BJ (cell line): ENCODE measurements at regions of chr16 and their contacts with region 1.

Region 1: DNA sequence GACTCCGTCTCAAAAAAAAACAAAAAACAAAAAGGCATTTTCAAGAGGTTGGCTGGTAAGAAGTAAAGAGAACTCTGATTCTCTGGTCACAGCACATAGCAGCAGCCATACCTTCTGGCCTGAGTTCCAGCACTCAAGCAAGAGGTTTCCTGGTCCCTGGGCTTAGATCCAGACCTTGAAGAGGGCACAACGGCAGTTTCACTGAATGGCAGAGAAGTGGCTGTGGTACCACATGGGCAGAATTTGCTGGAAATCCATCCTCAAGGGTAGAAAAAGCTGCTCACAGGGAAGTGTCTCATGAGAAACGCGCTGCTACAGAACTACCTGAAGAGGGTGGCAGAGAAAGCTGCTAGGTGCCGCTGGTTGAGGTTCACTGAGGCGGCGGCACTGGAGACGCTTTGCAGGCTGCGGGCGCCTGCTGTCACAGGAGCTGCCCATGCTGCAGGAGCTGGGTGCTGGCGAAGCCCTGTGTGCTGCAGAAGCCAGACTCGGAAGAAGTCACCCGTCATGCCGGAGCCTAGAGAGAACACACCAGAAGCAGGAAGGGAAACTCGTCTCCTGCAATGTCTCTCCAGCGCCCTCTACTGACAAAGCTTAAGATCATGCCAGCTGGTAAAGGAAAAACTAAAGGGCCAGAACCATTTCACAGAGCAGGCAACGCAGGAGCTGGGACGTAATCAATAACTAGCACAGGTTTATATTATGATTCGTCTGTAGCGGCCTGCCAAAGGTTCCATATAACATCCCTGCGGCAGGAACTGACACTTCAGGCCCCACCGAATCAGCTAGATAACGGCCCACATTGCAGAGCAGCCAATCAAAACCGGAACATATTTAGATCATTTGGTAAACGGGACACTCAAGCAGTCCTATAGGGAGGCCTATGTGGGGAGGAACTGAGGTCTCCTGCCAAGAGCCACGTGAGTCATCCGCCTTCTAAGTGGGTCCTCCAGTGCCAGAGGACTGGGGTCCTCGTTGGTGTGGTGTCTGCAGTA is 5.4 kb upstream of the ZNF213 start:
- DNase-seq: no peak
- H3K4me3 ChIP-seq: no peak overlapping the region
- H3K27me3 ChIP-seq: no peaks in the 10 kb centered on the region
- CTCF ChIP-seq: peak; percentile 92

Region 2: GRCh38 chr16:3023669-3024478 is 105.6 kb before region 1 on chr16 and contains the starts of genes HCFC1R1 and THOC6:
- CTCF ChIA-PET with region 1: interaction called, 57 read pairs
- POLR2A ChIA-PET with region 1: no interaction called
- DNase-seq: peak; percentile 88
- H3K4me3 ChIP-seq: peak within 1 kb of the TSS; percentile 59
- H3K27me3 ChIP-seq: peaks cover under 1% of the 10 kb centered on the region; the same call in 1 of the 2 replicates
- CTCF ChIP-seq: no peak
- polyA plus RNA-seq, gene HCFC1R1: 26.2 and 33.7 TPM in 2 replicates
- polyA plus RNA-seq, gene THOC6: 11.0 and 20.5 TPM in 2 replicates

Region 3: GRCh38 chr16:3065069-3065741 is 64.2 kb before region 1 on chr16 and contains the start of gene IL32:
- CTCF ChIA-PET with region 1: interaction called, 56 read pairs
- POLR2A ChIA-PET with region 1: no interaction called
- DNase-seq: peak; percentile 9
- H3K4me3 ChIP-seq: no peak within 1 kb of the TSS
- H3K27me3 ChIP-seq: no peaks in the 10 kb centered on the region
- CTCF ChIP-seq: no peak
- polyA plus RNA-seq, gene IL32: 11.3 and 18.1 TPM in 2 replicates

Region 4: DNA sequence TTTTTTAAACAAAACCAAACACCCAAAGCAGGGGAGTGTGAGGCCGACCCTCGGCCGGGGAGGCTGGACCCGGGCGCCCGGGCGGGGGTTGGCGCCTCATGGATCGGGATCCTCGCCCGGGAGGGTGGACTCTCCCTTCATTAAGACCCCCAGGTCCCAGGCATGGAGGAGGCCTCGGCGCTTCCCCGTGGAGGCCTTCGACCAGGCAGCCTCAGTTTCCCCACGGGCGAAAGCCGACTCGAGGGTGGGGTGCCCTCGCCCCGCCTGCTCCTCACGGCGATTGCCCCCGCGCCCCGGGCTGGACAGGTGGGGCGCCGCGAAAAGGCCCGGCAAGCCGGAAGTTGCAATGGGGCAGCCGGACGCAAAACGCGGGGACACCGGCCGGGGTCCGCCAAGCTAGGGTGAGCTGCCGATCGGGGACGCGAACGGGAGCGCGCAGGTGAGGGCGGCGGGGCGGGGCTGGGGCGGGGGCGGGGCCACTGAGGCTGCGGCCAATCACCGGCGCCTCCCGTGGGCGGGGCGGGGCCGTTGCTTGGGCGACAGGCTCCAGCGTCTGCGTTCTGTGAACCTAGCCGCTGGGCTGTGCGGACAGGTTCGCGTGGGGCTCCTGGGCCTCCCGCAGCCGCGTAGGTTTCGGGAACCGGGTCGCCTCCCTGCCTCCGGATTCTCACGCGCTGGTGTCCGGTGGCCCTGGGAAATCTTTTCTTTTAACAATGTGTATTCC is 23.1 kb before region 1 on chr16:
- CTCF ChIA-PET with region 1: interaction called, 11 read pairs
- POLR2A ChIA-PET with region 1: interaction called, 3 read pairs
- DNase-seq: no peak
- H3K4me3 ChIP-seq: peak overlapping the region; percentile 75
- H3K27me3 ChIP-seq: no peaks in the 10 kb centered on the region
- CTCF ChIP-seq: no peak

Region 5: DNA sequence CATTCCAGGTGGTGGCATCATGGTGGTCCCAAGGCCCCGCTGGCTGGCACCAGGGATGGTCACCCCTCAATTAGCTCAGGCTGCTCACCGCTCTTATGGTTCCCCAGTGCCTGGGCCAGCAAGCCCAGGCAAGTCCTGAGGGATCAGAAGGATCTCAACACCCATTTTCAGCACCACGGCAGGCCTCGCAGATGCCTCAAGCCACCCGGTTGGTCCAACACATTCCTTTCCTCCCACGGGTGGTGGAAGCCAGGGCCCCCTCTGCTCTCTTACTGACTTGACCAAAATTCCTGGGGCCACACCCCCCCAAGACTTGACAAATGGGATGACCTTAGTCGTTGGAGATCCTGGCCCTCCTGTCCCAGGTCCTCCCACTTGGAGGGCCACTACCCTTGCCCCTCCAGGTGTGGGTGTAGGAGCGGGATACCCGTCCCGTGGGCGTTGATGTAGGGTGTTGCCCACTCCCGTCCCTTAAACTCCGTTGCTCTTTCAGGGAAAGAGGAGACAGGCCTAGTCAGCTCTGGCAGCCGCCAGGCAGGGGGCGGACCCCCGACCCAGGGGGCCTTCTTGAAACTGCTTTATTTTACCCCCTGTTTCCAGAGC is 11.1 kb before region 1 on chr16:
- CTCF ChIA-PET with region 1: interaction called, 17 read pairs
- POLR2A ChIA-PET with region 1: no interaction called
- DNase-seq: no peak
- H3K4me3 ChIP-seq: no peak overlapping the region
- H3K27me3 ChIP-seq: no peaks in the 10 kb centered on the region
- CTCF ChIP-seq: no peak

Region 6: DNA sequence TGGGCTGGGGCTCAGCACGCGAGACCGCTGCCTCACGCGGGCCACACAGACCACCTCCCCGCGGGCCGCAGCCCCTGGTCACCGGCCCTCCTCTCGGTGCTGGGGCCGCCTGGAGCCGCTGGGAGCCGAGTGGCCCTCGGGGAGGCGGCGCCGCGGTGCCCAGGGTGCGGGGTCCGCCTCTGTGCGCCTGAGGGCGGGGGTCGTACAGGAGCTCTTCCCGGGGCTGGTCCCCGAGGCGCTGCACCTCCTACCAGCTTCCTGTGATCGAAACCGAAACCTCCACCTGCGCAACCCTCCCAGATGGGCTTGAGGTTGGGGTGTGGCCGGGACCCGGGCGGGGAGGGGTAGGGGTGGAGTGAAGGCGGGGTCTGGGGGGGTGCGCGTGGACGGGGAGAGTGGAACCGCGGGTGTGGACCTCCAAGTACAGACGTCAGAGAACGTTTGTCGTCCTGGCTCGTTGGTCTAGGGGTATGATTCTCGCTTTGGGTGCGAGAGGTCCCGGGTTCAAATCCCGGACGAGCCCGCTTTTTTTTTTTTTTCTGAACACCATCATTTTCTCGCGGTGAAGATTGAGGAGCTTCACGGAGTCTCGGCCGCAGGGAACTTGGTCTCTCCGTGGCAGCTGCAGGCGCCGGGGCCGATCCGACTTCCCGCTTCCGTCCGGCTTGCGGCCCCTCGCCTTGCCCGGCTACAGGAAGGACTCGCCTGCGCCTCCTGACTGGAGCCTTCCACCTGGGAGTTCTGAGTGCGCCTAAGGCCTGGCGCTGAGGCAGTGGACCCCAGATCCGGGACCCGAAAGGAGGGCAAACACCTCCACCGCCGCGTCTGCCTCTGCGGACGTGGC is 29.3 kb after region 1 on chr16:
- CTCF ChIA-PET with region 1: interaction called, 10 read pairs
- POLR2A ChIA-PET with region 1: no interaction called
- DNase-seq: no peak
- H3K4me3 ChIP-seq: peak overlapping the region; percentile 60
- H3K27me3 ChIP-seq: no peaks in the 10 kb centered on the region
- CTCF ChIP-seq: no peak